ENCODE measurements at regions of chrX and their contacts with region 1.

Region 1: GRCh38 chrX:76850851-76851250 is 423.3 kb downstream of the MAGEE1 start:
- DNase-seq: peak; percentile 9
- ATAC-seq: peak; percentile 81
- H3K4me3 Mint-ChIP-seq: no peak overlapping the region
- H3K27ac Mint-ChIP-seq: no peak overlapping the region
- H3K4me1 Mint-ChIP-seq: no peaks in the 10 kb centered on the region
- H3K27me3 Mint-ChIP-seq: no peaks in the 10 kb centered on the region
- CTCF ChIP-seq: peak; percentile 36

Region 2: GRCh38 chrX:76796311-76796710 is 54.5 kb before region 1 on chrX:
- CTCF ChIA-PET with region 1: no interaction called
- POLR2A ChIA-PET with region 1: no interaction called
- DNase-seq: no peak
- ATAC-seq: no peak
- H3K4me3 Mint-ChIP-seq: no peak overlapping the region
- H3K27ac Mint-ChIP-seq: no peak overlapping the region
- H3K4me1 Mint-ChIP-seq: no peaks in the 10 kb centered on the region
- H3K27me3 Mint-ChIP-seq: no peaks in the 10 kb centered on the region; the same call in 1 of the 2 replicates
- CTCF ChIP-seq: no peak

Region 3: DNA sequence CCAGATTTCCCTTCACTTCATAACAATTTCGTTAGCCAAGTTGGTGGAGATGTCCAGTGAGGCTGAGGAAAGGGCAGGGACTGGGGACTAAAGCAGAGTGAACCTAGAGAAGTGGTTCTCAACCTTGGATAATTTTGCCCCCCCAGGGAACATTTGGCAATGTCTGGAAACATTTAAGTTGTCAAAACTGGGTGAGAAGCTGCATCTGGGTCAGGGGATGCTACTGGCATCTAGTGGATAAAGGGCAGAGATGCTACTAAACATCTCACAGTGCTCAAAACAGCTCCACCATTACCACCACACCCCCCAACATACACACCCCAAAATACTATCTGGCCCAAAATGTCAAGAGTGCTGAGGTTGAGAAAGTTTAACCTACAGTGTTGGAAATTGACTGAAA is 564.3 kb after region 1 on chrX:
- CTCF ChIA-PET with region 1: interaction called, 11 read pairs
- POLR2A ChIA-PET with region 1: no interaction called
- DNase-seq: no peak
- ATAC-seq: peak; percentile 64; the same call in 1 of the 2 replicates
- H3K4me3 Mint-ChIP-seq: no peak overlapping the region
- H3K27ac Mint-ChIP-seq: no peak overlapping the region
- H3K4me1 Mint-ChIP-seq: peaks cover 2% of the 10 kb centered on the region
- H3K27me3 Mint-ChIP-seq: peaks cover 2% of the 10 kb centered on the region; the same call in 1 of the 2 replicates
- CTCF ChIP-seq: no peak